ENCODE measurements at regions of chr13 and their contacts with region 1.

Region 1: DNA sequence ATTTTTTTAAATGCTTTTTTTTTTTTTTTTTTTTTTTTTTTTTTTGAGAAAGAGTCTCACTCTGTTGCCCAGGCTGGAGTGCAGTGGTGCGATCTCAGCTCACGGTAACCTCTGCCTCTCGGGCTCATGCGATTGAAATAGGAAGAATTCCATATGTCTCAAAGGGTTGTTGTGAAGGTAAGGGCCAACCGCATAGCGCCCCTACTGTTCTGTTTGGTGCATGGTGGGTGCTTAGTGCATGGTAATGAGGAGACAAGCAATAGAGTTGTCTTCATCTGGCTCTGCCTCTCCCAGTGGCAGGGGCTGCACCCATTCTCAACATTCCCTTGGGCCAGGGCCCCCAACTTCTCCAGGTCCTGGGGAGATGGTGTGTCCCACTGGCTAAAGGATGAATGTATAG is 68.7 kb downstream of the RASL11A start:
- DNase-seq: no peak
- H3K4me3 ChIP-seq: no peak overlapping the region
- H3K27ac ChIP-seq: no peak overlapping the region
- H3K4me1 ChIP-seq: peaks cover 0 to 11% (median 4%) of the 10 kb centered on the region in 4 donors
- H3K27me3 ChIP-seq: peaks cover 0 to 4% (median 0%) of the 10 kb centered on the region in 4 donors
- CTCF ChIP-seq: peak in 1 of 3 experiments; percentile 35
- EP300 ChIP-seq: no peak
- POLR2A ChIP-seq: no peak

Region 2: GRCh38 chr13:27296496-27296895 is 42.8 kb before region 1 on chr13:
- intact Hi-C with region 1: loop called (anchors 5 kb)
- DNase-seq: no peak
- H3K4me3 ChIP-seq: no peak overlapping the region
- H3K27ac ChIP-seq: no peak overlapping the region
- H3K4me1 ChIP-seq: no peaks in the 10 kb centered on the region
- H3K27me3 ChIP-seq: no peaks in the 10 kb centered on the region
- CTCF ChIP-seq: no peak
- EP300 ChIP-seq: no peak
- POLR2A ChIP-seq: no peak

Region 3: DNA sequence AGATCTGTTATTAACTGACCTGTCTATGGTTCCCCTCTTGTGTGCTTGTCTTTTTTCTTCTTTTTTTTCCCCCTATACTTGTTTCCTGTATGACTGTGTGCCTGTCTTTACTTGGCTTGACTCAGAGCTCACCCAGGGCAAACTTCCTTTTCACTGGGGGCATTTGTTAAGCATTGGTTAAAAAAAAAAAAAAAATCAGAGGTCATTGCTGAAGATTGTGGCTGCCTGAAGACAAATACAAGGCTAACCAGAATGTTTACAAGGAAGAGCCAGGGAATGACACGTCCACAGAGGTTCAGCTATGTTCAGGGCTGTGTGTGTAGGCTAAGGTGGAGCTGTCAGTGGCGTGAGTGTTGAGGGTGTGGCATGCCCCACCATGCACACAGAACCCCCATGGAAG is 234.0 kb after region 1 on chr13:
- intact Hi-C with region 1: no loop called
- DNase-seq: no peak
- H3K4me3 ChIP-seq: no peak overlapping the region
- H3K27ac ChIP-seq: no peak overlapping the region
- H3K4me1 ChIP-seq: peaks cover 0 to 28% (median 23%) of the 10 kb centered on the region in 4 donors
- H3K27me3 ChIP-seq: no peaks in the 10 kb centered on the region
- CTCF ChIP-seq: no peak
- EP300 ChIP-seq: no peak
- POLR2A ChIP-seq: no peak

Measured in esophagus muscularis mucosa (tissue), 4 donors.